ENCODE measurements at regions of chr3 and their contacts with region 1.

Region 1: DNA sequence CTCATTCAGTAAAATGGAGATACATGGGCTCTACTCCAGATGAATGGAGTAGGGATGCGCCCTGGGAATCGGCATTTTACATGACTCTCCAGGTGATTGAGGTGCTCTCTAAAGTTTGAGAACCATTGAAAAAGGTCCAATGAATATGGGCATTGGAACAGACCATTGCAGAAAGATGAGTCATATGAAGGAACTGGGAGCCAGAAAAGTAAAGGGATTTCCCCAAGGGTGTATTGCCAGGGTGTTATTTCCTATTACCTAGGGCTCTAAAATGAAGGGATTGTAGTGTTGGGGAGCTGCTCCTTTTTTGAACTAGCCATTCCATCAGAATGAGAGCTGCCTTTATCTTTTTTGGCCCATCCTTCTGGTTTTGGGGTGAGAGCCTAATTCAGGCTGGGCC is 21.7 kb downstream of the CLDN11 start:
- DNase-seq: peak; percentile 31
- H3K4me3 ChIP-seq: no peak overlapping the region
- H3K27ac ChIP-seq: no peak overlapping the region
- H3K4me1 ChIP-seq: peaks cover 13% of the 10 kb centered on the region
- H3K27me3 ChIP-seq: no peaks in the 10 kb centered on the region
- CTCF ChIP-seq: no peak
- POLR2A ChIP-seq: no peak

Region 2: DNA sequence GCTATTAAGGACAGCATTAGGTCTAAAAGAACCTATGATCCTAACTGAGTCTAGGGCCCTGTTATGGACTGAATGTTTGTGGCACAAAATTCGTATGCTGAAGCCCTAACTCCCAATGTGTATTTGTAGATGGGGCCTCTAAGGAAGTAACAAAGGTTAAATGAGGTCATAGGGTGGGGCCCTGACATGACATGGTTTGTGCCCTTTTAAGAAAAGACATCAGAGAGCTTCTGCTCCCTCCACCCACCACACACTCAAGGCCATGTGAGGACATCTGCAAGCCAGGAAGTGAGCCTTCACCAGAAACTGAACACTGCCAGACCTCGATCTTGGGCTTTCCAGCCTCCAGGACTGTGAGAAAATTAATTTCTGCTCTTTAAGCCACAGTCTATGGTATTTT is 308.0 kb before region 1 on chr3:
- CTCF ChIA-PET with region 1: no interaction called
- POLR2A ChIA-PET with region 1: no interaction called
- dilution Hi-C with region 1: no loop called
- intact Hi-C with region 1: no loop called
- DNase-seq: no peak
- H3K4me3 ChIP-seq: no peak overlapping the region
- H3K27ac ChIP-seq: no peak overlapping the region
- H3K4me1 ChIP-seq: no peaks in the 10 kb centered on the region
- H3K27me3 ChIP-seq: no peaks in the 10 kb centered on the region
- CTCF ChIP-seq: no peak
- POLR2A ChIP-seq: no peak

Region 3: DNA sequence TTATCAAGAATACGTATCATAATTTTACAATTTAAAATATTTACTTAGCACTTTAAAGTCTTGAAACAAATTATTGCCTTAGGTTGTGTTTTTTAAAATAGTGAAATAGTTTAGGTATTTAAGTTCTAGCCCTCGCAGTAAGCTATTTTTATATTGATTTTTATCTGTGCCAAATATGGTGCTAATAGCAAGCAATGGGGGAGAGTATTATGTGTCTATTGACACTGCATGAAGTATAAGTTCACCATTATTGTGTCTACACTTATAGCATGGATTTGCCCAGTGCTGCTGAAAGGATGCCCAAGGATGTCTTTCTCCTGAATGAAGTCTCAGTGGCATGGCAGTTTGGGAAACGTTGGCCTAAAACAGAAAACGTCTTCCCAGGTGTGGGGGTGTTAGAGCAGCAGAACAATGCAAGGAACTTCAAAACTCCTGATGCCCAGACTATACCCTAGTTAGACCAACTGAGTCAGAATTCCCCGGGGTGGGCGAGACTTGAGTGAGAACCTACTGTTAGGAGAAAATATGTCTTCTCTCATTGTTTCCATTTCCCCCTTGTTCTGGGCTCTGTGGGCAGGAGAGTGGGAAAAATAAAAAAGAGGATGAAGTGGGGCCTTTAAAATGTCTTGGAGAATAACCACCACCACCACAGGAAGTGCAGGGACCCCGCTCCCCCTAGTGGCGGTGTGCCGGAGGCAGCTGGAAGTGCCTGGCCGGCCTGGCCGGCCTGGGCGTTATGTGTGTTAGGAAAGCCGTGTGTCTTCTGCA is 249.7 kb after region 1 on chr3:
- CTCF ChIA-PET with region 1: no interaction called
- POLR2A ChIA-PET with region 1: interaction called, 12 read pairs
- dilution Hi-C with region 1: no loop called
- intact Hi-C with region 1: no loop called
- DNase-seq: no peak
- H3K4me3 ChIP-seq: no peak overlapping the region
- H3K27ac ChIP-seq: no peak overlapping the region
- H3K4me1 ChIP-seq: peaks cover 11% of the 10 kb centered on the region
- H3K27me3 ChIP-seq: no peaks in the 10 kb centered on the region
- CTCF ChIP-seq: peak; percentile 59 to 61
- POLR2A ChIP-seq: no peak

Region 4: DNA sequence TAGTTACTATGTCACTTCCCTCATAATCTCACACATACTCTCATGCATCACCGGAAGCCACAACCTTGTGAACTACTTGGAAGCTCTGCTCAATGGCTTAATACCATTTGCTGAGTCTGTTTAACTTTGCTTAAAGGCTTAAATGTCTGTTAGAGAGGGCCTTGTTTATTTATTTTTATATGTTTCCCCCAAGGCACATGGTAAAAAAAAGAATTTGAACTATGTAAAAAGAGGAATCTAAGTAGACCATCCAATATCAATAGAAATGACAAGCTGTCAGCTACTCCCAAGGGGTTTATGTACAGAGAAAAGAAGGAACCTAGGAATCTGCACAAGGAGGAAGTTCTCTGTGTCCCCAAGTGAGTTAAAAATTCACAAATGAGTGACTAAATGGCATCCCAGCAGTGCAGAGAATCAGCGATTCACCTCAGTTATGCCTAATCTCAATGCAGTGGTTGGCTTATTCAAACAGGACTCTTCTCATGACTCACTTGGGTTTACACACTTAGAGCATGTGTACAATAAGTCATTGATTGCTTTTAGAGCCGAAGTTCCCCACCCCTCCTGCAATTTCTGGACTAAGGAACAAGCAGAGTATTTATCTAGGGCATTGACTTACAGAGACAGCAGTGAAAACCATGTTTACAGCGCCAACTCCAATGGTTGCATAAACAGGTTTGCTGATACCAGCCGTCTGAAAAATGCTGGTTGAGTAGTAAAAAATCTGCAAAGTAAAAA is 561.8 kb after region 1 on chr3:
- CTCF ChIA-PET with region 1: no interaction called
- POLR2A ChIA-PET with region 1: no interaction called
- dilution Hi-C with region 1: no loop called
- intact Hi-C with region 1: no loop called
- DNase-seq: peak; percentile 10
- H3K4me3 ChIP-seq: no peak overlapping the region
- H3K27ac ChIP-seq: no peak overlapping the region
- H3K4me1 ChIP-seq: peaks cover 34% of the 10 kb centered on the region
- H3K27me3 ChIP-seq: no peaks in the 10 kb centered on the region
- CTCF ChIP-seq: no peak
- POLR2A ChIP-seq: no peak

Measured in endothelial cell of umbilical vein (primary cell).